Activated T-helper 2 cell treated with anti-CD3 and anti-CD28 coated beads, Interferon-gamma antibody, Interleukin-2, Interleukin-4, amounts not matched to agents 10 μg/mL and 5 μg/mL and 100 μg/mL, durations not matched to agents 14 hours and 24 hours and 36 hours (primary cell): ENCODE measurements at regions of chr3 and their contacts with region 1.

Region 1: GRCh38 chr3:5026331-5027218 is 47.3 kb downstream of the BHLHE40 start:
- DNase-seq: peak; percentile 41
- H3K4me3 Mint-ChIP-seq: peak overlapping the region; percentile 77
- H3K27ac Mint-ChIP-seq: peak overlapping the region; percentile 90
- H3K4me1 Mint-ChIP-seq: peaks cover 57% of the 10 kb centered on the region
- H3K27me3 Mint-ChIP-seq: no peaks in the 10 kb centered on the region

Region 2: DNA sequence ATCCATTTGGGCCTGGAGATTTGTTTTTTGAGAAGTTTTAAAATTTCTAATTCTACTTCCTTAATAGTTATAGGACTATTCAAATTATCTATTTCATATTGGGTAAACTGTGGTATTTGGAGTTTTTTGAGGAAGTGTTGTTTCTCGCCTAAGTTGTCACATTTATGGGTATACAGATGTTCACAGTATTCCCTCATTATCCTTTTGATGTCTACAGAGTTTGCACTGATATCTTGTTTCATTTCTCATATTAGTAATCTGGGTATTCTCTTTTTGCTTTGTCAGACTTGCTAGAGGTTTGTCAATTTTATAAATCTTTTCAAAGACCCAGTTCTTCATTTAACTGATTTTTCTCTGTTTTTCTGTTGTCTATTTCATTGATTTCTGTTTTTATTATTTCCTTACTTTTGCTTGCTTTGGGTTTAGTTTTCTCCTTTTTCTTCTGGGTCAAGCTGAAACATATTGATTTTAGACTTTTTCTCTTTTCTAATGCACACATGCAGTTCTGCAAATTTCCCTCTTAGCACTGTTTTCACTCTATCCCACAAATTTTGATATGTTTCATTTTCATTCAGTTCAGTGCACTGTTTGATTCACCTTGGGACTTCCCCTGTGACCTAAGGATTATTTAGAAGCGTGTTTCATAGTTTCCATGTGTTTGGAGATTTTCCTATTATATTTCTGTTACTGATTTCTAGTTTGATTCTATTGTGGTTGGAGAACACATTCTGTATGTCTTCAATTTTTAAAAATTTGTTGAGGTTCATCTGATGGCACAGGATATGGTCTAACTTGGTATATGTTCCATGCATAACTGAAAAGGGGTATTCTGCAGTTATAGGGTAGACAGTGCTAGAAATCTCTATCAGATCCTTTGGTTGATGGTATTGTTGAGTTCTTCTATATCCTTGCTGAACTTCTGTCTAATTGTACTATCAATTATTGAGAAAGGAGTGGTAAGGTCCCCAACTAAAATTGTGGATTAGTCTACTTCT is 639.1 kb before region 1 on chr3:
- intact Hi-C with region 1: loop called (anchors 10 kb)
- DNase-seq: no peak
- H3K4me3 Mint-ChIP-seq: no peak overlapping the region
- H3K27ac Mint-ChIP-seq: peak overlapping the region; percentile 87
- H3K4me1 Mint-ChIP-seq: peaks cover 45% of the 10 kb centered on the region
- H3K27me3 Mint-ChIP-seq: no peaks in the 10 kb centered on the region

Region 3: DNA sequence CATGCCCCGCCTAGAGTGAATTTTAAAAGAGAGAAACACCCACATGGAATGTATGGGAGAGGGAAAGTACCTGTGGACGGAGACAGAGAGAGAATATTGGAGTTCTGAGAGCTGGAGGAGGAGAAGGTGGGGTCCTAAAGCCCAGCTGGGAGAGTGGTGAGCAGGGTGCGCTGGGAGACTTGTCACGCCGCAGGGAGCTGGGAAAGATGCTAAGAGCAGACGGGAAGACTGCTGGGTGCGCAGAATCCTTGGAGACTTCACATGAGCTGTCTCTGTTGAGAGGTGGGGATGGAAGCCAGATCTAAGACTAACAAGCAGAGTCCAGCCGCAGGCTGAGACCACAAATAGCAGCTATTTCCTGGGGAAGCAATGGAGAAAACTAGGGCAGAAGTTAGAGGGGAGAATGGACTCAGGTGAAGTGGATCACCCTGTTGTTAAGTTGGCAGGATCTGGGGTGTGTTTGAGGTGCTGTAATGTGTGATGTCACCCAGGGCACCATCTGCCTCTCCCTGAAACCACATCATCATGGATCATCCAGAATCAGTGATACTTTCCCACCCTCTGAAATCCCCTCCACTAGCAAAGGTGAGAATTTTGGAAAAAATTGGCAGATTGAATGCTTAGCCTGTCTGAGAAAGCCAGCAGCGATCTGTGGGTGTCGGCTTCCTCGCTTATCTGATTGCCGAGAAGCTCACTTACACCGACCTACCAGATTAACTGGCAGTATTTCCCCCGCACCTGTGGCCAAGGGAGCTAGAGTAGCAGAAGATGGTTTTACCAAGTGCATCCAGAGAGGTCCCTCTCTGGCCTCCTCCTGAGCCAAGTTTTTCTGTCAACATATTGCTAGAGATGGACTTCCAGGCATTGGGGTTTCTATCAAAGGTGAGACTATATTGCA is 222.2 kb before region 1 on chr3:
- intact Hi-C with region 1: loop called (anchors 1 kb)
- DNase-seq: peak; percentile 31
- H3K4me3 Mint-ChIP-seq: peak overlapping the region; percentile 35
- H3K27ac Mint-ChIP-seq: peak overlapping the region; percentile 78
- H3K4me1 Mint-ChIP-seq: peaks cover 62% of the 10 kb centered on the region
- H3K27me3 Mint-ChIP-seq: no peaks in the 10 kb centered on the region

Region 4: GRCh38 chr3:4850928-4851265 is 175.7 kb before region 1 on chr3:
- intact Hi-C with region 1: loop called (anchors 1 kb)
- DNase-seq: no peak
- H3K4me3 Mint-ChIP-seq: peak overlapping the region; percentile 28
- H3K27ac Mint-ChIP-seq: peak overlapping the region; percentile 97
- H3K4me1 Mint-ChIP-seq: peaks cover 81% of the 10 kb centered on the region
- H3K27me3 Mint-ChIP-seq: no peaks in the 10 kb centered on the region

Region 5: DNA sequence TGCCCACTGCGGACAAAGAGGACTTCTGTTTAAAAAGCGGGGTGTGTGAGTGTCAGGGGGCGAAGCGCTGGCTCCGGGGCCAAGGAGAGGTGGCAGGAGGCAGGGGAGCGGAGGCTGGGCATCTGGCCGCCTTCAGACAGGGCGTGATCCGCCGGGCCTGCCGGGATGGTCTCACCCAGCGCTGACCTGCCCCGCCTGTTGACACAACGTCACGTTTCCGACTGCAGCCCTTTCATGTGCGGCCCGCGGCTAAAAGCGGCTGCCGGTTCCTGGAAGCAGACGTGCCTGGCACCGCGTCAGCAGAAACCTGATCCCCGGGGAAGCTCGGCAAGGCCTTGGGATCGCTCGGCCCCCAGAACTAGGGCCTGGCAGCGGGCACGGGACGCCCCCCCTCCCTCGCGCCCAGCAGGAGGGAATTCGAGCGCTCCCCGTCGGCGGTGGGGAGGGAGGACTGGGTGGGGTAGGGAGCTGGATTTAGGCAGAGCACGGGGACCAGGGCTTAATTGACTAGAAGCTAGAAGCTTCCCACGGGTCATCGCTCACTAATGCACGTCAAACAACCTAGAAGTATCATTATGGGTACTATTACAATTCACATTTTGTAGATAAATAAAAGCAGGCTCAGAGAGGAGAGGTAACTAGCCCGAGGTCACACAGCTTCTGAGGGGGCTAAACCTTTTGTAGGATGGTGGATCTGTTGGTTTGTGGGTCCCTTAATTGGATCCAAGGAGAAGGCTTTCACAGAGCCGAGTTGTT is 39.6 kb before region 1 on chr3:
- intact Hi-C with region 1: loop called (anchors 1 kb)
- DNase-seq: peak; percentile 75
- H3K4me3 Mint-ChIP-seq: peak overlapping the region; percentile 82
- H3K27ac Mint-ChIP-seq: peak overlapping the region; percentile 85
- H3K4me1 Mint-ChIP-seq: peaks cover 53% of the 10 kb centered on the region
- H3K27me3 Mint-ChIP-seq: no peaks in the 10 kb centered on the region

Region 6: DNA sequence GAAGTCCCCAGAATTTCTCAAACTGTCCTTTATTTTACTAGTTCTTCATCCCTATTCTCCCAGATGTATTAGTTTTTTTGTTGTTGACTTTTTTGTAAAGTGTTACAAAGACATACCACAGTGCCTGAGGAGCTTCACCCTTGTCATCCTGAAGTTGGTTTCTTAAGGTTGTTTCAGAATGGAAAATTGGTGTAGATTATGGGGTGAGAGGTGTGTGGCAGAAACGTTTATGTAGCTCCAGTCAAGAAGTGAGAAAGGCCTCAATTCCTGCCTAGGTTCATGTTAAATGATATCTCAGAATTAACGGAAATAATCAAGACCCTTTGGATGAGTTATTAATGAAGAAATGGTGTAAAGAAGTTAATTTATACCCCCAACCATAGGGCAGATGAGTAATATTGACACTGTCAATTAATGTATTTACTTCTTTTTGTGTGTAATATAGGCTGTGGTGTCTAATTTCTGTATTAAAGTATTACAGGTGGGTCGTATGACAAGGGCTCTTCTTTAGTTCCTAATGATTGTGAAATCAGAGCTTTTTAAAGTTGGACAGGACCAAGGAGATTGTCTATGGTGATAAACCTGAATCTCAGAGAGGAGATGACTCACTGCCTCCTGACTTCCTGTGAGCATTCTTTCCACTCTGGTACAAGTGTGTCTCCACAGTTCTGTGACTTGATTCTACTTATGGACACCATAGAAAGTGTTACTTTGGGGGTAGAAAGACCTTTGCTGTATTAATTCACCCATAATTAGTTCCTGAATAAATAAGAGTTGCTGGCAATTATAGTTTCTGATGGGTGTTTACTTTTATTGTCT is 168.0 kb after region 1 on chr3:
- intact Hi-C with region 1: loop called (anchors 2 kb)
- DNase-seq: peak; percentile 47
- H3K4me3 Mint-ChIP-seq: peak overlapping the region; percentile 62
- H3K27ac Mint-ChIP-seq: peak overlapping the region; percentile 94
- H3K4me1 Mint-ChIP-seq: peaks cover 85% of the 10 kb centered on the region
- H3K27me3 Mint-ChIP-seq: no peaks in the 10 kb centered on the region